Transverse colon (tissue), 4 donors: ENCODE measurements at regions of chr1 and their contacts with region 1.

Region 1: DNA sequence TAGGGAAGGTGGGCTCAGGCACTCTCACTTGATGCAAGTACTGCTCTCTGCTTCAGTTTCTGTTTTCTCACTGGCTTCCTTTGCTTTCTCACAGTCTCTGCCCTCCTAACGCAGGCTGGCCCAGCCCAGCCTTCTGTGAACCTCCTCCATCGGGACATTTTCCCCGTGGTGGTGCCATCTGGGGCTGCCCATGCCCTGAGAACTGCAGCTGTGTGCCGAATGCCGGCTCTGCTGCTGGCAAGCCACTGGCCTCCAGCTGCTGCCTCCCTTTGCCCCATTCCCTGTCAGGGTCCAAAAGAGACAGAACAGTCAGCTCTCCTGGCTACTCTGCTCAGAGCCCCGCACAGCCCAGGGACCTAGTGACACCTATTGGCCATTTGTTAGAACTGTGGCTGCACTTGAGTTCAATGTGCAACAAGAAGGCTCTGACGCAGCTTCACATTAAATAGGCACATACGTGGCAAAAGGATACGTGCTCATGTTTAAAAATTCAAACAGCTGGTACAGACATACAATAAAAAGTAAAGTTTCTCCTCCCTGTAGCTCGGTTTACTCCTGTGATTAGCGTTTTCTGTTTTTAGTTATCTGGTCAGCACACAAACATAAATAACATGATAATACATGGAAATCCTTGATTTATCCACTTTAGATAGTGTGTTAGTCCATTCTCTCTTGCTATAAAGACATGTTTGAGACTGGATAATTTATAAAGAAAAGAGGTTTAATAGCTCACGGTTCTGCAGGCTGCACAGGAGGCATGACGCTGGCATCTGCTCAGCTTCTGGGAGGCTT is 46.6 kb downstream of the FCRL5 start:
- DNase-seq: peak; percentile 75
- H3K4me3 ChIP-seq: no peak overlapping the region
- H3K27ac ChIP-seq: no peak overlapping the region
- H3K4me1 ChIP-seq: peaks cover 0 to 17% (median 4%) of the 10 kb centered on the region in 4 donors
- H3K27me3 ChIP-seq: no peaks in the 10 kb centered on the region
- CTCF ChIP-seq: peak; percentile 64 to 76 (median 73)
- EP300 ChIP-seq: no peak
- POLR2A ChIP-seq: no peak

Region 2: DNA sequence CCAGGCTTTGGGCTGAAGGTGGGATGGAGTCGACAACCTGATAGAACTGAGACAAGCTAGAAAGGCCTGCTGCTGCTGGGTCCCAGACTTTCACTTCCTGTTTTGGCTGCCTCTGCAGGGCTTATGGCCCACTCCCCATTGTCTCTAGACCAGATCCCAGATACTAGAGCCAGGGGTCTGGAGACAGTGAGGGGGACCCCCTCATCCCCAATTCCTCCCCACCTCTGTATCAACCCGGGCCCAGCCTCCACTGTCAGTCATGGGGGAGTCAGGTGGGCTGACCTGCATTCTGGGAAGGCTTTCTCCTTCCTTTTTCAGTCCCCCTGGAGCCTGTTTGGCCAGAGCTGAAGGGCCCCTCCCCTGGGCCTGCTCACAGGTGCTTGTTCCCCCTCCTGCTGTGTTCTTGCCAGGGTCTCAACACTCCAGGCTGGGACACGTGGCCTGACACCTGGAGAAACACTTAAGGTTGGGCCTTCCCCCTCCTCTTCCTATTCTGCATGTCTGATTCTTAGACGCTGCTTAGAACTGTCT is 388.1 kb before region 1 on chr1:
- in situ Hi-C with region 1: no loop called
- intact Hi-C with region 1: loop called (anchors 5 kb)
- DNase-seq: no peak
- H3K4me3 ChIP-seq: no peak overlapping the region
- H3K27ac ChIP-seq: no peak overlapping the region
- H3K4me1 ChIP-seq: no peaks in the 10 kb centered on the region
- H3K27me3 ChIP-seq: peaks cover 9% of the 10 kb centered on the region
- CTCF ChIP-seq: no peak
- EP300 ChIP-seq: no peak
- POLR2A ChIP-seq: no peak